Sciatic nerve (tissue), 2 donors: ENCODE measurements at regions of chr17 and their contacts with region 1.

Region 1: GRCh38 chr17:82813299-82814051 is 26.3 kb downstream of the ZNF750 start:
- DNase-seq: no peak
- ATAC-seq: no peak

Region 2: GRCh38 chr17:82775001-82775823 is 38.3 kb before region 1 on chr17:
- intact Hi-C with region 1: loop called (anchors 1 kb)
- DNase-seq: peak; percentile 81
- ATAC-seq: peak; percentile 65